HEK293T (cell line): ENCODE measurements at regions of chr9 and their contacts with region 1.

Region 1: DNA sequence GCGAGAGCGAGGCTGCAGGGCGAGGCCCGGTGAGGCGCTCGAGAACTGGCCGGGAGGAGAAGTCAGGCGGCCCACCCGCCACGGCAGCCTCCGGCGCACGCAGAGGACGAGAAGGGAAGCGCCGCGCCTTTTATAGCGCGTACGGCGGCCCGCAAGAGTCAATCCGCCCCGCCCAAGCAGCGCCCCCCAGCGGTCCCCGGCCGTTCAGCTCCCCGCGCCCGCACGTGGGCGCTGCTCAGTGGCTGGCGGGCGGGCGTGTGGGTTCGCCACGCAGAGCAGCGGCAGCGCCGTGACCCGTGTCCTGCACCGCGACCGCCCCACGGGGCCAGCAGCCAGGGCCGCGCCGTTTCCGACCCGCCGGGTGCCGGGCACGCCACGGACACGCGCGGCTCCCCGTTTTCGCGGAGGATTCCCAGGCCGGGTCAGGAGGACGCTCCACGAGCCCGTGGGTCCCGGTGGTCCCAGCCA is 14.6 kb downstream of the LCN10 start:
- DNase-seq: peak; percentile 91

Region 2: DNA sequence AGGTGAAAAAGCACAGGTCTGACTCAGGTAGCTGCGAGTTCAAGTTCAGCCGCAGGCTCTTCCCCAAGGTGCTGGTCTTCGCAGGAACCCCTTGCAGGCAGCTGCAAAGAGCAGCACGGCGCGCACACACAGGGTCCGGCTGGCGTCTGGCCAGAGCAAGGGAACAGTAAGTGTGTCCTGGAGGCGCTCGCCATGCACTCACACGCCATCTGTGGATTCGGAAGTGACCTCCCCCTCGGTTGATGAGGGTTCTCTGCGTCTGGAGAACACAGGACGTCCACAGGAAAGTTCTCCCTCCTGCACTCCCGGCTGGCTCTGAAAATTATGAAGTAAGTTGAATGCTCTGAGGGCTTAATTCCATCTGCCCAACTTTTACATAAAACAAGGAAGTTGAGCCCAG is 79.4 kb before region 1 on chr9:
- CTCF ChIA-PET with region 1: no interaction called
- POLR2A ChIA-PET with region 1: no interaction called
- DNase-seq: no peak

Region 3: GRCh38 chr9:136711751-136712689 is 16.1 kb before region 1 on chr9 and contains the start of gene DIPK1B:
- CTCF ChIA-PET with region 1: interaction called, 12 read pairs
- POLR2A ChIA-PET with region 1: interaction called, 26 read pairs
- DNase-seq: peak; percentile 95

Region 4: GRCh38 chr9:136745389-136746154 is 17.5 kb after region 1 on chr9:
- CTCF ChIA-PET with region 1: interaction called, 5 read pairs
- POLR2A ChIA-PET with region 1: interaction called, 12 read pairs
- DNase-seq: no peak

Region 5: DNA sequence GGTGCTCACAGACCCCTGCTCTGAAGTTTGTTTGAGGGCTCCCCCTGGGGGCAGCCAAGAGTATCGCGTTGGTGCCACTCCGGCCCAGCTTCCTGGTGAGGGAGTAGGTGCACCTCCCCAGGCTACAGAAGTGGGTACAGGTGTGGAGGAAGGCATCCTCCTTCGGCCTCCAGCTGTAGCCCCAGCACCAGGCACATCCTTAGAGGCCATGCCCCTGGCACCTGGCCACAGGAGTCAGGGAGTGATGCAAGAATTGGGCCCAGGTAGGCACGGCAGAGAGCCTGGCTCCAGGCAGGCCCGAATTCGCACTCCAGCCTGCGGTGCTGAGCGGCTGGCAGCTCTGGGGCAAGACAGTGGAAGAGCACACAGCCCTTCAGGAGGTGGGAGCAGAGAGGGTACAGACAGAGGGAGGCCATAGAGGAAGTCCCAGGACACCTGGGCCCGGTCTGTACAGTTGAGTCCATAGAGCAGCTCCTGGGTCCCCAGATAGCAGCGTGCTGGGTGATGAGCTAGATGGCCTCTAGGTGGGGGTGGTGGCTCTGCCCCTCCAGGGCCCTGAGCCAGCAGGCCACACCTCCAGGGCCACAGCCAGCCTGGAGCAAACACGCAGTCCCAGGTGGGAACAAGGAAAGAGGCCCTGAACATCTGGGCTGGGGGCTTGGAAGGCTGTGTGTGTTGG is 339.9 kb after region 1 on chr9:
- CTCF ChIA-PET with region 1: no interaction called
- POLR2A ChIA-PET with region 1: no interaction called
- DNase-seq: peak; percentile 86